Activated CD4-positive, alpha-beta T cell treated with anti-CD3 and anti-CD28 coated beads for 36 hours (primary cell): ENCODE measurements at regions of chr7 and their contacts with region 1.

Region 1: GRCh38 chr7:2771274-2771731 is 72.8 kb downstream of the GNA12 start:
- DNase-seq: no peak
- ATAC-seq: no peak
- H3K4me3 Mint-ChIP-seq: no peak overlapping the region
- H3K27ac Mint-ChIP-seq: peak overlapping the region; percentile 90
- H3K4me1 Mint-ChIP-seq: peaks cover 40% of the 10 kb centered on the region
- H3K27me3 Mint-ChIP-seq: no peaks in the 10 kb centered on the region

Region 2: DNA sequence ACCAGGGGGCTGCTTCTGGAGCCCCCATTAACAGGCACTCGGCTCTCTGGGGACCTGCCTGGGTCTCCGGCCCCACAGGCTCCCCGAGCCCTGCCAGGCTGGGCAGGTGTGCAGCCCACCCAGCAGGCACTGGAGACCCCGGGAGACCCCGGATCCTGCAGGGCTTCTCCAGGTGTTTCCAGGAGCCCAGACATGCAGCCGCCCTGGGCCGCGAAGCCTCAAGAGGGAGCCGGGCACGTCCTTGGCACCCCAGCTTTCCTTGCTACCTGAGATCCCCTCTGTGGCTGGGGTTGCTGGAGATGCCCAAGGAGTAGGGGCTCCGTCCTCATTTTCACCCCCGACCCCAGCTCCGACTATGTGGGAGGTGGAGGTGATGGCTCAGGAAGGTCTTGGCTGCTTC is 91.0 kb before region 1 on chr7:
- CTCF ChIA-PET with region 1: no interaction called
- POLR2A ChIA-PET with region 1: no interaction called
- intact Hi-C with region 1: no loop called
- DNase-seq: no peak
- ATAC-seq: no peak
- H3K4me3 Mint-ChIP-seq: no peak overlapping the region
- H3K27ac Mint-ChIP-seq: no peak overlapping the region
- H3K4me1 Mint-ChIP-seq: no peaks in the 10 kb centered on the region
- H3K27me3 Mint-ChIP-seq: no peaks in the 10 kb centered on the region

Region 3: GRCh38 chr7:2720582-2721491 is 50.5 kb before region 1 on chr7:
- CTCF ChIA-PET with region 1: no interaction called
- POLR2A ChIA-PET with region 1: no interaction called
- intact Hi-C with region 1: no loop called
- DNase-seq: peak; percentile 95
- ATAC-seq: peak; percentile 86
- H3K4me3 Mint-ChIP-seq: no peak overlapping the region
- H3K27ac Mint-ChIP-seq: peak overlapping the region; percentile 32
- H3K4me1 Mint-ChIP-seq: peaks cover 49% of the 10 kb centered on the region
- H3K27me3 Mint-ChIP-seq: no peaks in the 10 kb centered on the region

Region 4: DNA sequence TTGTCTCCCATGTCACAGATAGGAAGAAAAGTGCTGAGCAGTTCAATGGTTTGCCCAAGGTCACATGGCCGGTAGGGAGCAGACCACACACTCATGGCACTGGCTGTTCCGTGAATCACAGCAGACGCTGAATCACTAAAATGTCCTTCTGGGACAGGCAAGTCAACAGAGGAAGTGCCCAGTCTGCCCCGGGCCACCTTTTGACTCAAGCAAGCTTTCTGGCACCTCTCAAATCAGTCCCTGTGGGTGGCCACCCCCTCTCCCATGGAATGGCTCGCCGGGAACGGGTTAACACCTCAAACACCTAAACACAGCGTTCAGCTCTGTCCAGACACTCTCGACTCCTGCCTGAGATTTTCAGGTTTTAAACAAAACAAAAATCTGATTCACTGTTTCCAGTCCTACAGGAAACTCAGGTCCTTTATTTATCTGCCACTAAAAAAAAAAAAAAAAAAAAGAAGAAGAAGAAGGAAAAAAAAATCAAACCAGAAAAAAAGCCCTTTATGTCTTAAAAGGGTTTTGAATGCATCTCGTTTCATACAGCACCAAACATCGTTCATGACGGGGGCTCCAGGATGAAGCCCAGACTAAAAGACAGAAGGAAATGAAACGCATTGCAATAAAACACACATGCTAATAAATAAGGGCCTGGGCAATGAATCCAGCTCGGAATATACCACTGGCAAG is 256.9 kb after region 1 on chr7:
- CTCF ChIA-PET with region 1: no interaction called
- POLR2A ChIA-PET with region 1: no interaction called
- intact Hi-C with region 1: loop called in 1 of 2 experiments (anchors 1 kb)
- DNase-seq: peak; percentile 84
- ATAC-seq: peak; percentile 95
- H3K4me3 Mint-ChIP-seq: peak overlapping the region; percentile 47
- H3K27ac Mint-ChIP-seq: peak overlapping the region; percentile 84
- H3K4me1 Mint-ChIP-seq: peaks cover 51% of the 10 kb centered on the region
- H3K27me3 Mint-ChIP-seq: no peaks in the 10 kb centered on the region